ENCODE measurements at regions of chr12 and their contacts with region 1.

Region 1: GRCh38 chr12:78739653-78740052 is 124.9 kb upstream of the SYT1 start:
- DNase-seq: no peak
- ATAC-seq: no peak
- H3K4me3 Mint-ChIP-seq: no peak overlapping the region
- H3K27ac Mint-ChIP-seq: no peak overlapping the region
- H3K4me1 Mint-ChIP-seq: no peaks in the 10 kb centered on the region
- H3K27me3 Mint-ChIP-seq: no peaks in the 10 kb centered on the region
- CTCF ChIP-seq: no peak

Region 2: DNA sequence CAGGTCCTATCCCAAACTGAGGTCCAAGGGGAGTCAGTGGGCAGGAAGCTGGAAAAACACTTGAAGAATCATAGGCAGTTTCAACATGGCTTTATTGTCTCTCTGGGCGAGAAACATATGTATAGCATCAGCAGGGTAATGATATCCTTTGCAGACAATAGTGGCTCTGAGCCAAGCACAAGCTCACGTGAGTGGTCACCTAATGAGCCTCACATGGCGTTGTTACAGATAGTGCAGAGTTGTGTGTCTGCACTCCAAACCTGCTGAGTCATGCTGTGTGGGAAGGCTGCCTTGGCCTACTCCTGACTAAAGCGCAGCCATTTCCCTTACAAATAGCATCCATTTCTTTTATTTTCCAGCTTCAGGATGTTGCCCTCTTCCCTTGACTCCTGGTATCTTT is 19.7 kb after region 1 on chr12:
- CTCF ChIA-PET with region 1: no interaction called
- POLR2A ChIA-PET with region 1: no interaction called
- intact Hi-C with region 1: no loop called
- DNase-seq: no peak
- ATAC-seq: no peak
- H3K4me3 Mint-ChIP-seq: no peak overlapping the region
- H3K27ac Mint-ChIP-seq: no peak overlapping the region
- H3K4me1 Mint-ChIP-seq: no peaks in the 10 kb centered on the region
- H3K27me3 Mint-ChIP-seq: no peaks in the 10 kb centered on the region
- CTCF ChIP-seq: no peak

Region 3: DNA sequence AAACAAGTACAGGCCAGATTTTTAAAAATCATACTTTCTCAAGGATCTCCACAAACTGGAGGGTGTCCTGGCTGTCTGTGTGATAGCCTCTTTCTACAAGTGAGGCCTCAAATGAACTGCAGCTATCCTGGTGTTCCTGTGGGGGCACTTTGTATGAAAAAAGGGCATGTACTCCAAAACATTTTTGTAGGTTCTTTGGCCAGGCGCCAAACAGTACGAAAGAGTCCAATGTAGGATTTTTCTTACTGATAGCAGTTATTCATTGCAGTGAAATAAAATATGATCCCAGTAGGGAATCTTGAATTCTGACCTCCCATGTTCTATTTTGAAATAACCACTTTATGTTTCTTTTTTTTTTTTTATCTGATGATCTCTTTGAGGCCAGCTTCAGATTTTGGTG is 569.4 kb after region 1 on chr12:
- CTCF ChIA-PET with region 1: no interaction called
- POLR2A ChIA-PET with region 1: no interaction called
- intact Hi-C with region 1: loop called (anchors 5 kb)
- DNase-seq: no peak
- ATAC-seq: no peak
- H3K4me3 Mint-ChIP-seq: no peak overlapping the region
- H3K27ac Mint-ChIP-seq: no peak overlapping the region
- H3K4me1 Mint-ChIP-seq: no peaks in the 10 kb centered on the region
- H3K27me3 Mint-ChIP-seq: no peaks in the 10 kb centered on the region
- CTCF ChIP-seq: no peak